Heart left ventricle (tissue), 16 donors: ENCODE measurements at regions of chr10 and their contacts with region 1.

Region 1: GRCh38 chr10:122142641-122143237 is 128.4 kb upstream of the BTBD16 start:
- DNase-seq: peak in 1 of 5 donors; percentile 53
- ATAC-seq: no peak
- H3K4me3 ChIP-seq: no peak overlapping the region
- H3K27ac ChIP-seq: peak overlapping the region; percentile 14 to 94 (median 87)
- H3K4me1 ChIP-seq: peaks cover 27 to 85% (median 68%) of the 10 kb centered on the region in 12 donors
- H3K27me3 ChIP-seq: no peaks in the 10 kb centered on the region
- CTCF ChIP-seq: peak; percentile 87 to 99 (median 94)
- POLR2A ChIP-seq: no peak

Region 2: DNA sequence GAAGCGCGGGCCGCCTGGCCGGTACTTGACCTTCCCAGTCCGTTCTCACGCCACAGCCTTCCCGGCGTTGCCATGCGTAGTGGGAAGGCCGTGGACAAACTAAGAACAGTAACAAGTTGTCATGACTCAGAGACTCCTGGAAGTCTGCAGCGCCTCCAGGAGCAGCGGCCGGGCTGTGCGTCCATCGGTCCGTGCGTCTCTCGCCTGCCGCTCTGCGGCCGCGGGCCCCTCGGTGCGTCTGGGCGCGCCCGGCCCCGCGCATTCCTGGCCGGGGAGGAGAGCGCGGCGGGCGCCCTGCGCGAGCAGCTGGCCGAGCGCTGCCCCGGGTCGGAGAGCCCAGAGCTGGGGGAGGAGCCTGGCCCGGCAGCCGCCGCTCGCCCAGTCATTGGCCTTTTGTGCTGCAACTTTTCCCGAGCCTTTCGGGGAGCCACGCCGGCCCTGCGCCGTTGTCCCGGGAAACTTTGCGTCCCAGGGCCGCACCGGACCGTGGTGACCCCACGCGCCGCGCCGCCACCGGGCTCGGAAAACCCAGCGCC is 30.0 kb before region 1 on chr10:
- intact Hi-C with region 1: loop called in 4 of 10 experiments (anchors 1 to 2 kb)
- DNase-seq: peak; percentile 86 to 94 (median 91)
- ATAC-seq: peak; percentile 54 to 90 (median 83)
- H3K4me3 ChIP-seq: peak overlapping the region; percentile 64 to 92 (median 81)
- H3K27ac ChIP-seq: peak overlapping the region; percentile 97 to 100 (median 99)
- H3K4me1 ChIP-seq: peaks cover 4 to 56% (median 42%) of the 10 kb centered on the region in 12 donors
- H3K27me3 ChIP-seq: peaks cover 0 to 16% (median 0%) of the 10 kb centered on the region in 9 donors
- CTCF ChIP-seq: peak; percentile 25 to 79 (median 54)
- POLR2A ChIP-seq: peak in 1 of 2 donors; percentile 67

Region 3: DNA sequence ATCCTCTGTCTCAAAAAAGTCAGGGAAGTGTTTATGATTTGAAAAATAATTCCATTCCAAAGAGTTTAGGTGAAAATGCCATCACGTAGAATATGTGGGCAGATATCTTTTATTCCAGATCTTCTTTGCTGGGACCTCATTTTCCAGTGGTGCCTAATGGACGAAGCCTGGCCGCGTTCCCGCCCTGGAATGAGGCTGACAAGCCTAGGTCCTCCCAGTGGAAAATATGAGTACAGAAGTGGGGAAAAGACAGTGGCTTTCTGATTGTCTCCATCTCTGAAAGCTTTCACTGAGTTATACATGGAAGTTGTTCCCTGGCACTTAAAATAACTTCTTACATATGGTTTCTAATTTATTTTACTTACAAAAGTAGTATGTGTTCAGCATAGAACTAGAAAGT is 14.4 kb before region 1 on chr10:
- intact Hi-C with region 1: loop called in 2 of 10 experiments (anchors 1 kb)
- DNase-seq: peak; percentile 80 to 84 (median 83)
- ATAC-seq: peak; percentile 43 to 73 (median 64)
- H3K4me3 ChIP-seq: peak overlapping the region in 9 of 12 donors; percentile 7 to 47 (median 23)
- H3K27ac ChIP-seq: peak overlapping the region; percentile 74 to 94 (median 82)
- H3K4me1 ChIP-seq: peaks cover 0 to 69% (median 43%) of the 10 kb centered on the region in 12 donors
- H3K27me3 ChIP-seq: no peaks in the 10 kb centered on the region
- CTCF ChIP-seq: peak in 3 of 12 donors; percentile 7 to 28 (median 15)
- POLR2A ChIP-seq: no peak

Region 4: GRCh38 chr10:122181055-122181732 is 38.5 kb after region 1 on chr10:
- intact Hi-C with region 1: loop called in 2 of 10 experiments (anchors 5 kb)
- DNase-seq: no peak
- ATAC-seq: no peak
- H3K4me3 ChIP-seq: no peak overlapping the region
- H3K27ac ChIP-seq: no peak overlapping the region
- H3K4me1 ChIP-seq: peaks cover 3 to 48% (median 29%) of the 10 kb centered on the region in 12 donors
- H3K27me3 ChIP-seq: no peaks in the 10 kb centered on the region
- CTCF ChIP-seq: no peak
- POLR2A ChIP-seq: no peak

Region 5: DNA sequence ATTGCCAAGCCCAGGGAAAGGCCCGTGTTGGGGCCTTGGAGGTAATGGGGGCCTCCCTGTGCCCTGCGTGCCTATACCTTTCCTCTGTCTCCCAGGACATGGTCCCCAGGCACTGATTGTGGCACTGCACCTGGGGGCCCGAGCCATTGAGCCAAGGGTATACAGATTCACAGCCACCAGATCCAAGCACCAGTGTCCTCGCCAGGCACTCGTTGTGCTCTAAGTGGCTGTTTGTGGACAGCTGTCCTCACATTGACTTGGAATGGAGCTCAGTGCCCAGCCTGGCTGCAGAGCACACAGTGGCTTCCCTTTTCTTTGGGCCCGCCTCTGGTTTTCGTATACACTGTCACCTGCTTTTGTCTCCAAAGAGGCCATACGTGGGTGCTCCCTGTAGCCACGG is 56.3 kb after region 1 on chr10:
- intact Hi-C with region 1: loop called in 1 of 10 experiments (anchors 5 kb)
- DNase-seq: peak; percentile 32 to 84 (median 72)
- ATAC-seq: peak; percentile 89 to 94 (median 92)
- H3K4me3 ChIP-seq: no peak overlapping the region
- H3K27ac ChIP-seq: peak overlapping the region; percentile 10 to 88 (median 57)
- H3K4me1 ChIP-seq: peaks cover 0 to 38% (median 10%) of the 10 kb centered on the region in 12 donors
- H3K27me3 ChIP-seq: no peaks in the 10 kb centered on the region
- CTCF ChIP-seq: no peak
- POLR2A ChIP-seq: no peak

Region 6: GRCh38 chr10:122213766-122214165 is 71.0 kb after region 1 on chr10:
- intact Hi-C with region 1: loop called in 2 of 10 experiments (anchors 5 kb)
- DNase-seq: peak in 1 of 5 donors; percentile 35
- ATAC-seq: peak in 3 of 4 donors; percentile 53 to 75 (median 72)
- H3K4me3 ChIP-seq: no peak overlapping the region
- H3K27ac ChIP-seq: no peak overlapping the region
- H3K4me1 ChIP-seq: peaks cover 0 to 9% (median 0%) of the 10 kb centered on the region in 12 donors
- H3K27me3 ChIP-seq: no peaks in the 10 kb centered on the region
- CTCF ChIP-seq: peak in 7 of 12 donors; percentile 10 to 45 (median 14)
- POLR2A ChIP-seq: no peak

Region 7: DNA sequence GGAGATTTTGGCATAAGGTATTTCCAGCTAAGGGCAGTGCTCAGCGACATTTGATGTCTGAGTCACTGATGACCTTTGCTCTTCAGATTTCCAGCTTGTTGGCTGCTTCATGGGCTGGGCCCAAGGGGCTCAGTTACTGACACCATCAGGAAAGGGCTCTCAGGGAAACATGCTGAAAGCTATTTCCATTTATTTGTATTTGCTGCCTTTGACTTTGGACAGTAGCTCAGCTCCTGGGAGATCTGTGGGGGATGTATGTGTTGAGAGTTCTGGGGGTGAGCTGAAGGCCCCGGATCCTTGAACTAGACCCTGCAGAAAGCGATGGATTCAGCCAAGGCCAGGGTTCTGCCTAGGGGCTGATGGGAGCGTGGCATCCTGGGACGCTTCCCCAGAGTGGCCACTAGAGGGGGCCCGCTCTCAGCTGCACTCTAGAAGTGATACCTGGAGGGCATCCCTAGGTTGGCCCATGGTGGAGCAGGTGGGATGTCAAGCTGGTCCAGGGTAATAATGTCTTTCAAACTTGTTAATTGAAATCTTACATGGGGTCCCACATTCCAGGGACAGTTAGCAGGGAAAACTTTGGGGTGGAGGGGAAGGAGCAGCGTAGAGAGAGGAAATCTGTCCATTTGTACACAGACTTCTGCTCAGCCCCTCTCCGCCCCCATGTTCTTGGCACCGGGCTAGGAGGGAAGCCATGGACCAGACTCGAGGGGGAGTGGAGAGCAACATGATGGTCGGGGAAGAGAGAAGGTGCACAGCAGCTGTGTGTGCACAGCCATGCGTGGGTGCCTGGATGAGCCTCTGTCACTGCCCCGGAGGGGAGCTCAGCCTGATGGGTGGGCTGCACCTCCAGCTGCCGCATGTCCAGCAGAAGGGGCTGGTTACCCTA is 125.4 kb after region 1 on chr10:
- intact Hi-C with region 1: loop called in 6 of 10 experiments (anchors 5 to 10 kb)
- DNase-seq: peak in 4 of 5 donors; percentile 38 to 74 (median 53)
- ATAC-seq: peak; percentile 41 to 72 (median 68)
- H3K4me3 ChIP-seq: no peak overlapping the region
- H3K27ac ChIP-seq: no peak overlapping the region
- H3K4me1 ChIP-seq: peaks cover 0 to 35% (median 9%) of the 10 kb centered on the region in 12 donors
- H3K27me3 ChIP-seq: no peaks in the 10 kb centered on the region
- CTCF ChIP-seq: peak; percentile 73 to 97 (median 91)
- POLR2A ChIP-seq: no peak

Region 8: GRCh38 chr10:122307669-122308486 is 165.1 kb after region 1 on chr10:
- intact Hi-C with region 1: no loop called
- DNase-seq: peak; percentile 77 to 88 (median 78)
- ATAC-seq: peak; percentile 89 to 93 (median 91)
- H3K4me3 ChIP-seq: peak overlapping the region in 8 of 12 donors; percentile 2 to 30 (median 14)
- H3K27ac ChIP-seq: peak overlapping the region; percentile 71 to 91 (median 82)
- H3K4me1 ChIP-seq: peaks cover 0 to 37% (median 21%) of the 10 kb centered on the region in 12 donors
- H3K27me3 ChIP-seq: no peaks in the 10 kb centered on the region
- CTCF ChIP-seq: no peak
- POLR2A ChIP-seq: no peak

Region 9: GRCh38 chr10:122557516-122557915 is 414.8 kb after region 1 on chr10:
- intact Hi-C with region 1: no loop called
- DNase-seq: no peak
- ATAC-seq: no peak
- H3K4me3 ChIP-seq: no peak overlapping the region
- H3K27ac ChIP-seq: no peak overlapping the region
- H3K4me1 ChIP-seq: no peaks in the 10 kb centered on the region
- H3K27me3 ChIP-seq: peaks cover 0 to 6% (median 0%) of the 10 kb centered on the region in 9 donors
- CTCF ChIP-seq: no peak
- POLR2A ChIP-seq: no peak